OCI-LY7 (cell line): ENCODE measurements at regions of chr1 and their contacts with region 1.

Region 1: DNA sequence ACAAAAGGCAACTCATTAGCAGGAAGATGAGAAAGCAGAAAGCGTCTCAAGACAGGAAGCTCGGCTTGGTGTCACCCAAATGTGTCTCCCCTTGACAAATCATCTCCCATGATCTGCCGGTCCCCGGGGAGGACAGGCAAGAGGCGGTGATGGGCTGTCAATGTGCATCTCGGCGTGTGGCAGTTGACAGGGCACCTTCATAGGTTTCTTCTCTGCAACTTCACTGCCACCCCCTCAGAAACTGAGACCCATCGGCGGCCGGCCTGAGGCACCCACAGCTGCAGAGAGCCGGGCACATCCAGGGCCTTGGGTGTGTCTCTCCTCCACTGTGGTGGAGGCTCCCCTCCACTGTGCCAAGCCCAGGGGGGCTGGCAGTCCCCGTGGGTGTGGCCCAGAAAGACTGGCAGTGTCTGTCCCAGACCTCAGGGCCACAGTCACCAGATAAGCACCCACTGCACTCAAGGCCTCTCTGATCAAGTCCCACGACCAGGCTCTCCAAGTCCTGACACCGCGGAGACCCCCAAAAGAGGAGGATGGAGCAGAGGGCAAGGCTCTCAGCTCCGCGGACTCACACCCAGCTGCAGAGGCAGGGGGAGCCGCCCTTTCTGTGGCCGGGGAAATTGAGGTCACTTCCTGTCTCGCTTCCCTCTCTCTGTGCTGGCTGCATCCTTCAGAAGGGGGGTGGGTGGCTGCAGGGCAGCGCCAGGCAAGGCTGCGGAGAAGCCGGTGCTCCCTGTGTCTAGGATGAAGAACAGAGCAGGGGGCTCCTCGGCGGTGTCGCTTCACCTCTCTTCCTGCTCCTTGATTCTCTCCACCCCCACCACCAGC is 39.6 kb upstream of the LBR start:
- DNase-seq: peak; percentile 96
- H3K4me3 ChIP-seq: peak overlapping the region; percentile 74
- H3K27ac ChIP-seq: peak overlapping the region; percentile 95
- H3K4me1 ChIP-seq: peaks cover 47% of the 10 kb centered on the region
- CTCF ChIP-seq: peak; percentile 17; the same call in 1 of the 2 replicates

Region 2: DNA sequence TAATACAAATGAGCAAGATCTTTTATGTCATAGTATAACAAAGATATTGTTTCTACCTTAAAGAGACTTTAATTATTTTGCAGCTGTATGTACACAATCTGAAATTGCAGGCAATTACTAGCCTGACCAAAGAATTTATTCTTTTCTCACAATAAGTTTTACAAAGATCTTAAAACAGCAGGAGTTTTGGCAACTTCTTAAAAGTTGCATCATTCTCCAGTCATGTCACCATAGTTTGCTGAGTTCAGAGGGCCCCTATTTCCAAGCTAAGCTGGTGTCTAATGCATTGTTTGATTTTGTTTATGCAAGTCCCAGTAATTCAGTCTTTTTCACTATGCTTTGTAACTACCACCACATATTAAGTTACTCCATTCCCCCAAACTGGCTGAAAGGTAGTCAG is 423.1 kb before region 1 on chr1:
- CTCF ChIA-PET with region 1: no interaction called
- POLR2A ChIA-PET with region 1: no interaction called
- intact Hi-C with region 1: no loop called
- DNase-seq: no peak
- H3K4me3 ChIP-seq: no peak overlapping the region
- H3K27ac ChIP-seq: no peak overlapping the region
- H3K4me1 ChIP-seq: no peaks in the 10 kb centered on the region
- CTCF ChIP-seq: no peak

Region 3: GRCh38 chr1:225412803-225413351 is 54.5 kb before region 1 on chr1:
- CTCF ChIA-PET with region 1: no interaction called
- POLR2A ChIA-PET with region 1: no interaction called
- intact Hi-C with region 1: no loop called
- DNase-seq: no peak
- H3K4me3 ChIP-seq: no peak overlapping the region
- H3K27ac ChIP-seq: no peak overlapping the region
- H3K4me1 ChIP-seq: no peaks in the 10 kb centered on the region
- CTCF ChIP-seq: no peak

Region 4: DNA sequence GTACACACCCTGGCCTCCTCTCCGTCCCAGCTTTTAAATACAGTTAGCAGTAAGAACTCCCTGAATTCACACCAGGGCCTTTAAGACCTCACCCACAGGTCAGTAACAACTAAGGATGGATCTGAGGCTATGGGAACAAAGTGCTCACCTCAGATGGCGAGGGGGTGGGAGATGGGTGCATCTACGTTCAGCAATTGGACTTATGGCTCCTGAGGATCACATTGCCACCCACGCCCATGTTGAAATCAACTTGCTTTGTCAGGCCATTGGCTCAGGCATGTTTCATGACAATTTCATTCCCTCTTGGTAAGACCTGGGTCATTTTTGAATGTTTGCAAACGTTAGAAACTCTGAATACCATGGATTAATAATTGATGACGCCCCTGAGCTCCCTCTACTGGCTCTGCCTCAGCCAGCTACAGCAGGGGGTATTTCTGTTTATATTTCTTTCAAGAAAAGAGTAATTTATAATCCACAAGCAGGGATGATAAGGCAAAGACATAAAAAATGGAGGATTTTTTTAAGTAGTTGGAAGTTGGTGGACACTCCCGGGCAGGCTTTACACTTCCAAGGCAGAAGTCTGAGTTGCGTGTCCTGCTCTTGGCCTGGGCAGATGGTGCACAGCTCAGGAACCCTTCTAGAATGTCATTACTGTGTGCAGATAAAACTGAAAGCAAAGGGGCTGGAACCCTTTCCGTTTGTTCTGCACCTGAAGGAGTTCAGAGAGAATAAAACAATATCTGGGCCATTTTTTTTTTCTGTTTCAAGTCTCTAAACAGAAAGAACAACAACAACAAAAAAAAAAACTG is 25.9 kb before region 1 on chr1:
- CTCF ChIA-PET with region 1: interaction called, 8 read pairs
- POLR2A ChIA-PET with region 1: interaction called, 49 read pairs
- intact Hi-C with region 1: loop called (anchors 1 kb)
- DNase-seq: peak; percentile 68
- H3K4me3 ChIP-seq: peak overlapping the region; percentile 26
- H3K27ac ChIP-seq: peak overlapping the region; percentile 84
- H3K4me1 ChIP-seq: peaks cover 94% of the 10 kb centered on the region
- CTCF ChIP-seq: peak; percentile 96

Region 5: GRCh38 chr1:225480825-225481434 is 13.5 kb after region 1 on chr1:
- CTCF ChIA-PET with region 1: interaction called, 7 read pairs
- POLR2A ChIA-PET with region 1: interaction called, 51 read pairs
- intact Hi-C with region 1: no loop called
- DNase-seq: peak; percentile 92
- H3K4me3 ChIP-seq: peak overlapping the region; percentile 35
- H3K27ac ChIP-seq: peak overlapping the region; percentile 92
- H3K4me1 ChIP-seq: peaks cover 76% of the 10 kb centered on the region
- CTCF ChIP-seq: peak; percentile 97

Region 6: DNA sequence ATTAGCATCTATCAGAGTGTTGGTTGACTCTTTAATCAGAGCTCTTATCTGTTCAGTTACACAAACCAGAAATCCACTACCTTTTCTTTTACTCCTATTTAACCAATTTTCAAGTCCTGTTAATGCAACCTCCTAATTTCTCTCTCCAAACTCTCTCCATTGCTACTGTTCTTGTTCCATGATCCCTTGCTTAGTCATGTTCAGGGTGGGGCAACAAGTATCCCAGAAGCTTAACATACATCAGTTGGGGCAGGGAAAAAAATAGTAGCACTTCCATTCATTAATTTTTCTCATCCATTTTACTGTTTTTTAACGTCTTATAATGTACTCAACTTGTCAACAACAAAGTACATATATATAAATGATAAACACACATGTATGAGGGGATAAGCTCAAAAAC is 71.7 kb after region 1 on chr1:
- CTCF ChIA-PET with region 1: no interaction called
- POLR2A ChIA-PET with region 1: no interaction called
- intact Hi-C with region 1: no loop called
- DNase-seq: no peak
- H3K4me3 ChIP-seq: no peak overlapping the region
- H3K27ac ChIP-seq: no peak overlapping the region
- H3K4me1 ChIP-seq: peaks cover 24% of the 10 kb centered on the region
- CTCF ChIP-seq: no peak

Region 7: DNA sequence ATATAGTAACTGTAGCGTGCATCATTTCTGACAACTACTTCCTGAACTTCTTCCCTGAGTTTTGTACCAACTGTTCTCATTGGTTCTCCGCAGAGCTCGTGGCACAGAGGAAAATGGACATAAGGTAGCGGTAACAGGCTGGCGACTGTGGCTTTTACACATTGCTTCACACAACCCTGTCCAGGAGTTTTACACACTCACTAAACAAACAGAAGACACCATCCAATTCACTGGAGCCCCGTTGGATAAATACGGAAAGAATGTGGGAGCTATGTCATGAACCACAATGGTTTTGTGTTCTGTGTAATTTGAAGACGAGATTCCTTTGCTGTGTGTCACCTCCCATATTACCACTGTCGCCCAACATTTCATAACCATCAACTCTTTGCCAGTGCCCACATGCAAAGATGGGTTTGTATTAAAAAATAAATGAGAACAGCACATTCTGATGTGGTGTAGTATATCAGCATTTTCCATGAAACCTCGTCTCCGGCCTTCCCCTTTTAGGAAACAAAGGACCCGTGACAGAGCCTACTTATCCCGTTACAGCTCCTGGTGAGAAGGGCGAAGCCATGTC is 232.8 kb after region 1 on chr1:
- CTCF ChIA-PET with region 1: no interaction called
- POLR2A ChIA-PET with region 1: no interaction called
- intact Hi-C with region 1: no loop called
- DNase-seq: no peak
- H3K4me3 ChIP-seq: no peak overlapping the region
- H3K27ac ChIP-seq: no peak overlapping the region
- H3K4me1 ChIP-seq: no peaks in the 10 kb centered on the region
- CTCF ChIP-seq: no peak

Region 8: DNA sequence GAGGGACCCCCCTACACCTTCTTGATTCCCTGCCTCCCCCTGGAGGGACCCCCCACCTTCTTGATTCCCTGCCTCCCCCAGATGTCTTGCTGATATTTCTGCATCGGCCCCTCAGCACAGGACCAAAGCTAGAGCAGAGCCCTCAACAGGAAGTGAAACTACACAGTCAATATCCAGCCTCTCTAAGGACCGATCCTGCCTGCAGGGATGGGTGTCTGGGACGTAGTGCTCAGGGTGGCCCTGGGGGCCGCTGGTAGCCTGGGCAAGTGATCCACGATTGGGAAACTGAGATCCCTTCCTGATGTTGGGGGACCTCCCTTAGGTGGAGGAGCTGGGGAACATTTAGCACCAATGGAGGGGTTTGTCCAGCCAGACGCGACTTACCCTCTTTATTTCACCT is 477.5 kb after region 1 on chr1:
- CTCF ChIA-PET with region 1: interaction called, 12 read pairs
- POLR2A ChIA-PET with region 1: interaction called, 3 read pairs
- intact Hi-C with region 1: no loop called
- DNase-seq: peak; percentile 85
- H3K4me3 ChIP-seq: peak overlapping the region; percentile 34
- H3K27ac ChIP-seq: peak overlapping the region; percentile 95
- H3K4me1 ChIP-seq: peaks cover 85% of the 10 kb centered on the region
- CTCF ChIP-seq: no peak